ENCODE measurements at regions of chr6 and their contacts with region 1.

Region 1: DNA sequence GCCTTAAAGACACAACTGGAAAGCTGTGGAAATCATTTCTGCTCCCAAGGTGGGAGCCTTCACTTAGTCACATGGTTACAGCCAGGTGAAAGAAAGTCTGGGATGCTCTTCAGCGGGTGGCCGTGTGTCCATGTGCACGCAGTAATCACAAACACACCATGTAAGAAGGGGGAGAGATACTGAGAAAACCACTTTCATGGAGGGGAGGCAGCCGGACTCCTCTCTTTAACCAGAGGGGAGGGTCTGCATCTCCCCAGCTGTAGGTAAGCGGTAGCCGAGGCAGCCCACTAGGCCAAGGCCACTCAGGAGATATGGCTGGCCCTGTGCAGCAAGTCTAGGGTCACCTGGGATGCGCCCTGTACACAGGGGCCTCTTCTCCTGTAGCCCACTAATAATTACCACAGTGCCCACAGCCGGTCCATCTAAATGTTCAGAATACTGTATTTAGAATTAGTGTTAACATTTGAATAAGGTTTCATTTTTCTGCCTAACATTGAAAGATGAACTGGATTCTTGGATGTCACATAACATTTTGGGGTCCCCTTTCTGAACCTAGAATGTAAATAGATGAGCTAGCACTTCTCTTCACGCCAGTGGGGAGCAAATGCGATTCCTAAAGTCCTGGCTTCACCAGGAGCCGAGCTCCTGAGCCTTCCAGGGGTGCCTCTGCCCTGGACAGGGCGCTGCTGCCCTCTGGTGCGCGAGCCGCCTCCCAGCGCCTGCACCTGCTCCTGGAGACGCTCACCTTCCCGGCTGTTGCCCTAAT is 15.9 kb downstream of the GPR31 start:
- DNase-seq: peak; percentile 62
- ATAC-seq: peak; percentile 73
- H3K4me3 Mint-ChIP-seq: peak overlapping the region; percentile 46
- H3K27ac Mint-ChIP-seq: peak overlapping the region; percentile 79
- H3K4me1 Mint-ChIP-seq: peaks cover 61% of the 10 kb centered on the region
- H3K27me3 Mint-ChIP-seq: no peaks in the 10 kb centered on the region
- CTCF ChIP-seq: no peak

Region 2: GRCh38 chr6:166786704-166787293 is 355.1 kb before region 1 on chr6:
- CTCF ChIA-PET with region 1: interaction called, 21 read pairs
- POLR2A ChIA-PET with region 1: no interaction called
- intact Hi-C with region 1: loop called (anchors 1 kb)
- DNase-seq: no peak
- ATAC-seq: peak; percentile 74
- H3K4me3 Mint-ChIP-seq: no peak overlapping the region
- H3K27ac Mint-ChIP-seq: no peak overlapping the region
- H3K4me1 Mint-ChIP-seq: no peaks in the 10 kb centered on the region
- H3K27me3 Mint-ChIP-seq: no peaks in the 10 kb centered on the region
- CTCF ChIP-seq: no peak

Region 3: DNA sequence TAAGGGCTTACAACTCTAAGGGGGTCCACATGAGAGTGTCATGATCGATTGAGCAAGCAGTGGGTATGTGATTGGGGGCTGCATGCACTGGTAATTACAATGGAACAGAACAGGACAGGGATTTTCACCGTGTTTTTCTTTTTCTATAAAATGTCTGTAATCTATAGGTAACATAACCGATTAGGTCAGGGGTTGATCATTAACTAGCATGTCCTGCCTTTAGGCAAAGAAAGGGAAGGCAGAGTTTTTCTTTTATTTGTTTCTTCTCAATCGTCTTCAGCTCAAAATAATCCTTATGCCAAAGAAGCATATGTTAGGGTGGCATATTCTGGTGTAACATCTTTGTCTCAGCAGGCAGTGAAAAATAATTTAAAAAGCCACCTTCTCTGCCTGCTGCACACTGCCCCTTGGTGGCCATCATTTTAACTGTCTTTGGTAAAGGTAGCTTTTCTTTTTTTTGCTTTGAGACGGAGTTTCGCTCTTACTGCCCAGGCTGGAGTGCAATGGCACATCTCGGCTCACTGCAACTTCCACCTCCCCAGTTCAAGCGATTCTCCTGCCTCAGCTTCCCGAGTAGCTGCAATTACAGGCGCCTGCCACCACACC is 152.3 kb before region 1 on chr6:
- CTCF ChIA-PET with region 1: interaction called, 80 read pairs
- POLR2A ChIA-PET with region 1: interaction called, 6 read pairs
- intact Hi-C with region 1: loop called (anchors 2 kb)
- DNase-seq: peak; percentile 22
- ATAC-seq: peak; percentile 99
- H3K4me3 Mint-ChIP-seq: no peak overlapping the region
- H3K27ac Mint-ChIP-seq: no peak overlapping the region
- H3K4me1 Mint-ChIP-seq: peaks cover 11% of the 10 kb centered on the region
- H3K27me3 Mint-ChIP-seq: no peaks in the 10 kb centered on the region
- CTCF ChIP-seq: peak; percentile 40

Region 4: GRCh38 chr6:167079853-167080297 is 62.0 kb before region 1 on chr6:
- CTCF ChIA-PET with region 1: interaction called, 20 read pairs
- POLR2A ChIA-PET with region 1: interaction called, 10 read pairs
- intact Hi-C with region 1: loop called (anchors 1 kb)
- DNase-seq: peak; percentile 65
- ATAC-seq: peak; percentile 99
- H3K4me3 Mint-ChIP-seq: peak overlapping the region; percentile 54
- H3K27ac Mint-ChIP-seq: peak overlapping the region; percentile 91
- H3K4me1 Mint-ChIP-seq: peaks cover 52% of the 10 kb centered on the region
- H3K27me3 Mint-ChIP-seq: no peaks in the 10 kb centered on the region
- CTCF ChIP-seq: peak; percentile 51

Region 5: GRCh38 chr6:167119670-167120381 is 22.0 kb before region 1 on chr6:
- CTCF ChIA-PET with region 1: interaction called, 105 read pairs
- POLR2A ChIA-PET with region 1: interaction called, 688 read pairs
- intact Hi-C with region 1: loop called (anchors 1 kb)
- DNase-seq: peak; percentile 19
- ATAC-seq: no peak
- H3K4me3 Mint-ChIP-seq: peak overlapping the region; percentile 91
- H3K27ac Mint-ChIP-seq: peak overlapping the region; percentile 89
- H3K4me1 Mint-ChIP-seq: peaks cover 95% of the 10 kb centered on the region
- H3K27me3 Mint-ChIP-seq: no peaks in the 10 kb centered on the region
- CTCF ChIP-seq: no peak

Region 6: GRCh38 chr6:167153521-167153959 is 11.7 kb after region 1 on chr6:
- CTCF ChIA-PET with region 1: interaction called, 14 read pairs
- POLR2A ChIA-PET with region 1: interaction called, 17 read pairs
- intact Hi-C with region 1: no loop called
- DNase-seq: no peak
- ATAC-seq: peak; percentile 62
- H3K4me3 Mint-ChIP-seq: peak overlapping the region; percentile 88
- H3K27ac Mint-ChIP-seq: peak overlapping the region; percentile 88
- H3K4me1 Mint-ChIP-seq: peaks cover 58% of the 10 kb centered on the region
- H3K27me3 Mint-ChIP-seq: no peaks in the 10 kb centered on the region
- CTCF ChIP-seq: no peak

Region 7: GRCh38 chr6:168117942-168118341 is 976.1 kb after region 1 on chr6:
- CTCF ChIA-PET with region 1: no interaction called
- POLR2A ChIA-PET with region 1: no interaction called
- intact Hi-C with region 1: no loop called
- DNase-seq: no peak
- ATAC-seq: no peak
- H3K4me3 Mint-ChIP-seq: no peak overlapping the region
- H3K27ac Mint-ChIP-seq: no peak overlapping the region
- H3K4me1 Mint-ChIP-seq: no peaks in the 10 kb centered on the region
- H3K27me3 Mint-ChIP-seq: no peaks in the 10 kb centered on the region
- CTCF ChIP-seq: no peak

Measured in activated B cell treated with CpG ODN at 0.5 μM for 24 hours (primary cell).